Endothelial cell of umbilical vein (primary cell): ENCODE measurements at regions of chr9 and their contacts with region 1.

Region 1: GRCh38 chr9:89597711-89598625 is 6.8 kb upstream of the GADD45G start:
- DNase-seq: peak; percentile 58
- H3K4me3 ChIP-seq: no peak overlapping the region
- H3K27ac ChIP-seq: no peak overlapping the region
- H3K4me1 ChIP-seq: no peaks in the 10 kb centered on the region
- H3K27me3 ChIP-seq: peaks cover 5% of the 10 kb centered on the region in 2 experiments
- CTCF ChIP-seq: peak; percentile 68 to 69
- POLR2A ChIP-seq: no peak

Region 2: DNA sequence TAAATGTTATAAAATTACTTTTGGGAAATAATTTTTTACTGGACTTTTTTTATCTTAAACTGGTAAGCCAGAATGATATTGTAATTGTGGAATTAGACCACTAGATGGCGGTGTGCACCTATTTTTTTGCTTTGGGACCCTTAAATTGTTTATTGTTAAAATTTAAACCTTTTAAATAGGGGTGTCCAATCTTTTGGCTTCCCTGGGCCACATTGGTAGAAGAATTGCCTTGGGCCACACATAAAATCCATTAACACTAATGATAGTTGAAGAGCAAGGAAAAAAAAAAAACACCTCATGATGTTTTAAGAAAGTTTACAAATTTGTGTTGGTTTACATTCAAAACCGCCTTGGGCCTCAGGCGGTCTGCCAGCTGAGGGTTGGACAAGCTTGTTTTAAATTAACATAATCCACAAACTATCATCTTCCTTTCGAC is 21.5 kb before region 1 on chr9:
- CTCF ChIA-PET with region 1: interaction called, 35 read pairs
- POLR2A ChIA-PET with region 1: no interaction called
- dilution Hi-C with region 1: no loop called
- intact Hi-C with region 1: loop called (anchors 2 kb)
- DNase-seq: peak; percentile 48
- H3K4me3 ChIP-seq: no peak overlapping the region
- H3K27ac ChIP-seq: no peak overlapping the region
- H3K4me1 ChIP-seq: no peaks in the 10 kb centered on the region
- H3K27me3 ChIP-seq: peaks cover 15 to 21% of the 10 kb centered on the region in 2 experiments
- CTCF ChIP-seq: peak; percentile 33 to 37
- POLR2A ChIP-seq: no peak

Region 3: DNA sequence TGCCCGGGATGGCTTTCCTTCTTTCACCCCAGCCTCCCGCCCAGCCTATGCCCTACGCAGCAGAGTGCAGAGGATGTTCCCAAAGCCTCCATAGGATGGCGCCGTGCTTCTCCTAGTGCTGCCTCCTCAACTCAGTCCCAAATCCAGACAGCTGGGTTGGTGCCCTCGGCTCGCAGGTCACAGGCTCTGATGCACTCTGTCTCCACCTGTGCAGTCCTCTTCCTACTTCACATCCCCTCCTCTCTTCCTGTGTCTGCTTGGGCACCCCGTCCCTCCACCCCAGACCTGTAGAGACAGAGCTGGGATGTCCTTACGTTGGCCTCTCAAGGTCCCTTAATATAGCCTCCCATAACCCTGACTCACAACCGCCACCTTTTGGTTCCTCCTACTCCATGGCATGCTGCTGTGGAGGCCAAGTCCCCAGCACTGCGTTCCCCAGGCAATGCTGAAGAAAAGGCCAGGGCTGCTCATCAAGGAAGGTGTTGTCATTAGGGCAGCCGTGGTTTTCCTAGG is 321.3 kb after region 1 on chr9:
- CTCF ChIA-PET with region 1: interaction called, 113 read pairs
- POLR2A ChIA-PET with region 1: no interaction called
- dilution Hi-C with region 1: no loop called
- intact Hi-C with region 1: loop called (anchors 1 kb)
- DNase-seq: no peak
- H3K4me3 ChIP-seq: no peak overlapping the region
- H3K27ac ChIP-seq: no peak overlapping the region
- H3K4me1 ChIP-seq: no peaks in the 10 kb centered on the region
- H3K27me3 ChIP-seq: no peaks in the 10 kb centered on the region
- CTCF ChIP-seq: no peak
- POLR2A ChIP-seq: no peak

Region 4: GRCh38 chr9:90095682-90096081 is 497.7 kb after region 1 on chr9:
- CTCF ChIA-PET with region 1: interaction called, 373 read pairs
- POLR2A ChIA-PET with region 1: no interaction called
- dilution Hi-C with region 1: no loop called
- intact Hi-C with region 1: no loop called
- DNase-seq: no peak
- H3K4me3 ChIP-seq: no peak overlapping the region
- H3K27ac ChIP-seq: no peak overlapping the region
- H3K4me1 ChIP-seq: no peaks in the 10 kb centered on the region
- H3K27me3 ChIP-seq: no peaks in the 10 kb centered on the region
- CTCF ChIP-seq: no peak
- POLR2A ChIP-seq: no peak

Region 5: GRCh38 chr9:90142580-90142979 is 544.6 kb after region 1 on chr9:
- CTCF ChIA-PET with region 1: interaction called, 13 read pairs
- POLR2A ChIA-PET with region 1: no interaction called
- dilution Hi-C with region 1: no loop called
- intact Hi-C with region 1: loop called (anchors 1 kb)
- DNase-seq: peak; percentile 31
- H3K4me3 ChIP-seq: no peak overlapping the region
- H3K27ac ChIP-seq: no peak overlapping the region
- H3K4me1 ChIP-seq: no peaks in the 10 kb centered on the region
- H3K27me3 ChIP-seq: no peaks in the 10 kb centered on the region
- CTCF ChIP-seq: peak; percentile 21 to 26
- POLR2A ChIP-seq: no peak

Region 6: DNA sequence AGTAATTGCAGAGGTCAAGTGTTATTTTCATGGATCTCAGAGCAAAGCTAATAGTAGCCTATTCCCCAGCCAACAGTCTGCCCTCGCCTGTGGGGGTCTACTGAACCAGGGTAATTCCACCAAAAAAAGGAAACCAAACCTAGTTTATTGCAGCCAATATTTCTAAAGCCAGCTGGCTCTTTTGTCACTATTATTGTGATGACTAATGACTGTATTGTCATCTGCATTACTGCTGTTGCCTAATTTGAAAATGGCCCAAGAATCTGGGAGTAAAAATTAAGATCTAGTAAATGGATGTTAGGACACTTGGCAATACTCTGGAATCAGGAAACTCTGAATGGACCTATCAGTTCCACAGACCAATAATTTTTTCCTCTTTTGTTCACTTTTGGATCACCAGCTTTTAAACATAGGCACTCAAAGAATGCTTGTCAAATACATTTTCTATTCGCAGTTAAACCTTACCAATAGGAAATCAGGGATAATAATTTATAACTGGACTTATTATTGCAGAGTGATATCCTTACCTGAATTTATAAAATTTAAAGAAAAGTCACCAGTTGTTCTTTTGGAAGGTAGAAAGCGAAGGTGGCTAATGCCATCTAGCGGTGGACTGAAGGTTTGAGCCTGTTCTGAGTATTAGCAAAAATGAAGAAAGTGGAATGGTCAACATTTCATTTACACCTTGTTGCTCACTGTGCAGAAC is 1272.8 kb after region 1 on chr9:
- CTCF ChIA-PET with region 1: interaction called, 96 read pairs
- POLR2A ChIA-PET with region 1: no interaction called
- dilution Hi-C with region 1: no loop called
- intact Hi-C with region 1: loop called (anchors 1 kb)
- DNase-seq: peak; percentile 32
- H3K4me3 ChIP-seq: no peak overlapping the region
- H3K27ac ChIP-seq: no peak overlapping the region
- H3K4me1 ChIP-seq: no peaks in the 10 kb centered on the region
- H3K27me3 ChIP-seq: no peaks in the 10 kb centered on the region
- CTCF ChIP-seq: peak; percentile 63 to 65
- POLR2A ChIP-seq: no peak